ENCODE measurements at regions of chr2 and their contacts with region 1.

Region 1: DNA sequence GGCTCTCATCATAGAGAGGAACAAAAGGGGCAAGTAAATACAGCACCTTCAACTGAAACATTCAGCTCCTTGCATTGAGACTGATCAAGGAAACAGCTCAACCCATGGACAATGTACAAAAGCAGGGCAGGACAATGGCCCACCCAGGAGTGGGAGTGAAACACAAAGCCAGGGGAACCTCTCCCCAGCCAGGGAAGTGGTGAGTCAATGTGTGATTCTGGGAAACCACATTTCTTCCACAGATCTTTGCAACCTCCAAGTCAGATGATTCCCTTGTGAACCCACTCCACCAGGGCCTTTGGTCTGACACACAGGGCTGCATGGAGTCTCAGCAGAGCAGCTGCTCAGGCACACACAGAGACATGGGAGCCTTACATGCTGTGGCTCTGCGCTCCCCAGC is 294.5 kb downstream of the NR4A2 start:
- DNase-seq: no peak
- H3K4me3 ChIP-seq: no peak overlapping the region
- H3K27ac ChIP-seq: no peak overlapping the region
- H3K4me1 ChIP-seq: no peaks in the 10 kb centered on the region
- H3K27me3 ChIP-seq: no peaks in the 10 kb centered on the region
- CTCF ChIP-seq: no peak
- POLR2A ChIP-seq: no peak

Region 2: GRCh38 chr2:157032017-157032416 is 994.0 kb after region 1 on chr2:
- intact Hi-C with region 1: loop called (anchors 5 kb)
- DNase-seq: no peak
- H3K4me3 ChIP-seq: no peak overlapping the region
- H3K27ac ChIP-seq: no peak overlapping the region
- H3K4me1 ChIP-seq: no peaks in the 10 kb centered on the region
- H3K27me3 ChIP-seq: no peaks in the 10 kb centered on the region
- CTCF ChIP-seq: no peak
- POLR2A ChIP-seq: no peak

Measured in breast epithelium (tissue), 4 donors.